AG04450 (cell line): ENCODE measurements at regions of chr17 and their contacts with region 1.

Region 1: DNA sequence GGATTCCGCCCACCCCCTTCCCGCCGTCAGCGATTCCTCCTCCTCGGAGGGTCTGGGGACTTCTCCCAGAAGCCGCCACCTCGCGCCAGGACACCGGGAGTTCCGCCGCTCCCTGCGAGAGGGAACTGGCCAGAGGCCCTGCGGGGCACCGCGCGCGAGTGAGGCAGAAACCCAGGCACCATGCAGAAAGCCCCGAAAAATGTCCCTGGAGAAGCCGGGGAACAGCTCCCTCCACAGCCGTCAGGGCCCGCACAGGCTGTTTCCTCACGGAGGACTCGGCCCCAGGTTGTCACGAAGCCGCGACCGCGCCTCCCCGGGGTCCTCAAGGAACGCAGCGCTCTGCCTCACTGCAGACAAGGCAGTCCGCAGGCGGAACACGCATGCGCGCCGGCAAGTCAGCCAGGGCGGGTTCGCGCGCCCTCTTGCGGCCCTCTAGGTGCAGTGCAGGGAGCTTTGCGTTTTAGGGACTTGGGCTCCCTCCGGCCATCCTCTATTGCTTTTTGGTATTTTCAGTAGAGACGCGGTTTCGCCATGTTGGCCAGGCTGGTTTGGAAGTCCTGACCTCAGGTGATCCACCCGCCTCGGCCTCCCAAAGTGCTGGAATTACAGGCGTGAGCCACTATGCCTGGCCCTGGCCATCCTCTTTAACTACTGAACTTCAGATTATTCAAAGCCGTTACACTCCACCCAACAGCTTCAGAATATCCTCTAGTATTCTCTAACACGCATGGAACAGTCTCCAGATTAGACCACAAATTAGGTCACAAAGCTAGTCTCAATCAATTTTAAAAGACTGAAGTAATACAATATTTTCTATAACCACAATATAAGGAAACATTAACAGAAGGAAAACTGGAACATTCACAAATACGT is 20.3 kb upstream of the ZNF287 start:
- DNase-seq: peak; percentile 67
- H3K4me3 ChIP-seq: peak overlapping the region; percentile 71
- H3K27ac ChIP-seq: no peak overlapping the region
- H3K27me3 ChIP-seq: peaks cover 5% of the 10 kb centered on the region
- CTCF ChIP-seq: peak; percentile 97

Region 2: GRCh38 chr17:16453493-16453851 is 135.9 kb before region 1 on chr17:
- CTCF ChIA-PET with region 1: interaction called, 29 read pairs
- POLR2A ChIA-PET with region 1: no interaction called
- DNase-seq: no peak
- H3K4me3 ChIP-seq: no peak overlapping the region
- H3K27ac ChIP-seq: peak overlapping the region; percentile 31
- H3K27me3 ChIP-seq: no peaks in the 10 kb centered on the region
- CTCF ChIP-seq: no peak

Region 3: DNA sequence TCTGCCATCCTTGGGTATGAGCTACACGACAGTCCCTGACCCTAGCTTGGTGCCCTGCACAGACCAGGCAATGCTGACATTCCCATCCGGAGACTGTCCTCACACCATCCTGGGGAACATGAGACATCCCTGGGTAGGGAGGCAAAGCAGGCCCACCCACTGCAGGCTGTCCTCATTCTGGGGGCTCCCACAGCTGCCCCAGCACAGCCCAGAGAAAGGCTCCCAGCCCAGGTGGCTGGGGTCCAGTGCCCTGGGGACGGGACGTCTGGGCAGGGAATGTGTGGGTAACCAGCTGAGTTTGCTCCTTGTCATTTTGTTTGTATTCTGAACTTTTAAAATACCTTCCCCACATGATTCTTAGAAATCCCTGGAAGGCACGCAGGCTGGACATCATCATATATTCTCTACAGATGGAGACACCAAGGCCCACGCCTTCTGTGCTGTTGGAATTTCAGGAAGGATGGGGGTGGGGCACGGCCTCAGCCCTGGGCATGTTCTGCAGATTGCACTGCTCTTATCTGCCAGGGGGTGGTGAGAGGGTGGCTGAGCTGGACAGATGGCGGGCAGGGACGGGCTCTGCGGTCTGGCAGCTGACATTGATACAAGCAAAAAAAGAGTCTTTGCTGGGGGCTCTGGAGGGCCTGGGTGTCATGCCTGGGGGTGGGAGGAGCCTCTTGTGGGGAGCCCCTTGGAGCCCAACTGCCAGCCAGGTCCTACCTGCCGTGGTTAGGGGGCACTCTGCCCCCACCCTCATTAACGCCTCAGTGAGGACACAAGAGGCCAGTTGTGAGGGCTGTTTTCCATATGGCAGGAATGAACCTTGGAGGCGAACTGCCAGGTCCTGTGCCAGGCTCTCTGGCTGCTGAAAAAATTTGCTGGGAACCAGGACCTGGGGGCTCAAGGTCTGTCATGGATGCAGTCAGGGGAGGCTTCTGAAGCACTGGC is 125.7 kb before region 1 on chr17:
- CTCF ChIA-PET with region 1: interaction called, 12 read pairs
- POLR2A ChIA-PET with region 1: no interaction called
- DNase-seq: peak; percentile 50
- H3K4me3 ChIP-seq: no peak overlapping the region
- H3K27ac ChIP-seq: peak overlapping the region; percentile 75
- H3K27me3 ChIP-seq: no peaks in the 10 kb centered on the region
- CTCF ChIP-seq: peak; percentile 47

Region 4: GRCh38 chr17:16537130-16537458 is 52.2 kb before region 1 on chr17:
- CTCF ChIA-PET with region 1: interaction called, 10 read pairs
- POLR2A ChIA-PET with region 1: no interaction called
- DNase-seq: no peak
- H3K4me3 ChIP-seq: no peak overlapping the region
- H3K27ac ChIP-seq: no peak overlapping the region
- H3K27me3 ChIP-seq: peaks cover 7% of the 10 kb centered on the region
- CTCF ChIP-seq: no peak

Region 5: DNA sequence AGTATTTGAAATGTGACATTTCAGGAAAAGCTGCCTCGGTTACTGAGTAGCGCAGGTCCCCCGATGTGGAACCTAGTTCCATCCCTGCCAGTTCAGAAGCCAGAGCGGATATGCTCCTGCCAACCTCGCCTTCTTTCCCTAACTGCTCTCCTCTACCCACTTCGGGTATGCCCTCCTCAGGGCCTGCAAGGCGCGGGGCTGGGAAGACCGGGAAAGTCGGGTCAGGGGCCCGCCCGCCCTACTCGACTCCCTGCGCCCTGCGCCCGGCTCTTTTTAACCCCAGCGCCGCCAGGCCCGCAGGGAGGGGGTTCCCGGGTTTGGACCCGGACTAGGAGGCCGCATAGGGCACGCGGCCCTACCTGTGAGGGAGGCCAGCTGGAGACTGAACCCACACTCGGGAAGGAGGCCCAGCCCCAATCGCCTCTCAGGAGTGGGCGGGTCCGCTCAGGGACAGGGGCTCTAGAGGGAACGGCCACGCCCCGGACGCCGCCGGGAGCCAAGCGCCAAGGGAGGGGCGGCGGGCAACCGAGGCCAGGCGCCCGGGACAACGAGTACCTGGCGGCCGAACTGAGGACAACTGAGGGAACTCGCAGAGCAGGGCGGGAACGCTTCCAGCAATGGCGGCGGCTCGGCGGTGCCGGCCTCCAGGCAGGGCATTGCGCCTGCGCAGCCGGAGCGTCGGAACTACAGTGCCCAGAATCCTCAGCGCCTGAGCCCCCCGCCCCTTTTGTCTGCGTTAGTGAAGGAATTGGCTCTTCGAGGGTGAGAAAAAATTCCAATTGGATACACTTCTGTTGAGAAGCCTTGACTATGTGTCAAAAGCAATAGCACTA is 64.1 kb after region 1 on chr17 and contains the start of gene ZNF624:
- CTCF ChIA-PET with region 1: interaction called, 13 read pairs
- POLR2A ChIA-PET with region 1: no interaction called
- DNase-seq: peak; percentile 61
- H3K4me3 ChIP-seq: peak within 1 kb of the TSS; percentile 76
- H3K27ac ChIP-seq: peak within 1 kb of the TSS; percentile 42
- H3K27me3 ChIP-seq: peaks cover 3% of the 10 kb centered on the region
- CTCF ChIP-seq: no peak
- polyA plus RNA-seq, gene ZNF624: 1.7 and 2.2 TPM in 2 replicates